ENCODE measurements at regions of chr22 and their contacts with region 1.

Region 1: DNA sequence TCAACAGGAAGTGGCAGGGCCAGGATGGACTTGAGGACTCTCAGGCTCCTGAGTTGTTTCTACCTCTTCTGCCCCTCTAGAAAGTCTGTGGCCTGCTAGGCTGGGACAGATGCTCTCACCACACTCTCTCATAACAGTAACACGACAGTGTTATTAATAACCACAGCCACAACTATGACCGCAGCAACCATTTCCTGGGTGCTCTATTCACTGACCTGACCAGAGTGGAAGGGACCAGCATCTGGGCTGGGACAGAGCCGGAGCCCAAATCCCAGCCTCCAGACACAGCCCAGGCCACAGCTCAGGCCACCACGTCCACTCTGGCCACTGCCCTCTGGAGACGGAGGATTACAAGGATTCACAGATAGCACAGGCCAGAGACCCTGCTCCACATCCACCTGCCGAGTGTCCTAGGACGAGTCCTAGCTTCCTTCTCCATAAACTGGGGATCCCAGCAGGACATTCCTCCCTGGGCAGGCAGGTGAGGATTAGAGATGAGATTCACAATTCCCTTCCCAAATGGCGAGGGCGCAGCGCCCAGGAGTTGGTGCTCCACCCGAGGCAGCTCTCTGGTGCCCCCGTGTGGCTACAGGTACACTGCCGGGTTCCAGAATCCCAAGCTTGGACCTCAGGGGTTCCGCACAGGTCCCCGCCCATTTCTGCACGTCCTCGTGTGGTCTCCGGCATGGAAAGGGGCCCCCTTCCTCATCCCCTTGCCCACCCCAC is 7.0 kb downstream of the PNPLA5 start:
- DNase-seq: peak; percentile 65
- H3K4me3 Mint-ChIP-seq: no peak overlapping the region
- H3K27ac Mint-ChIP-seq: no peak overlapping the region
- H3K4me1 Mint-ChIP-seq: no peaks in the 10 kb centered on the region
- H3K27me3 Mint-ChIP-seq: peaks cover 29% of the 10 kb centered on the region

Region 2: GRCh38 chr22:43897751-43898261 is 13.0 kb after region 1 on chr22:
- CTCF ChIA-PET with region 1: interaction called, 26 read pairs
- DNase-seq: no peak
- H3K4me3 Mint-ChIP-seq: no peak overlapping the region
- H3K27ac Mint-ChIP-seq: no peak overlapping the region
- H3K4me1 Mint-ChIP-seq: no peaks in the 10 kb centered on the region
- H3K27me3 Mint-ChIP-seq: peaks cover 40% of the 10 kb centered on the region

Region 3: DNA sequence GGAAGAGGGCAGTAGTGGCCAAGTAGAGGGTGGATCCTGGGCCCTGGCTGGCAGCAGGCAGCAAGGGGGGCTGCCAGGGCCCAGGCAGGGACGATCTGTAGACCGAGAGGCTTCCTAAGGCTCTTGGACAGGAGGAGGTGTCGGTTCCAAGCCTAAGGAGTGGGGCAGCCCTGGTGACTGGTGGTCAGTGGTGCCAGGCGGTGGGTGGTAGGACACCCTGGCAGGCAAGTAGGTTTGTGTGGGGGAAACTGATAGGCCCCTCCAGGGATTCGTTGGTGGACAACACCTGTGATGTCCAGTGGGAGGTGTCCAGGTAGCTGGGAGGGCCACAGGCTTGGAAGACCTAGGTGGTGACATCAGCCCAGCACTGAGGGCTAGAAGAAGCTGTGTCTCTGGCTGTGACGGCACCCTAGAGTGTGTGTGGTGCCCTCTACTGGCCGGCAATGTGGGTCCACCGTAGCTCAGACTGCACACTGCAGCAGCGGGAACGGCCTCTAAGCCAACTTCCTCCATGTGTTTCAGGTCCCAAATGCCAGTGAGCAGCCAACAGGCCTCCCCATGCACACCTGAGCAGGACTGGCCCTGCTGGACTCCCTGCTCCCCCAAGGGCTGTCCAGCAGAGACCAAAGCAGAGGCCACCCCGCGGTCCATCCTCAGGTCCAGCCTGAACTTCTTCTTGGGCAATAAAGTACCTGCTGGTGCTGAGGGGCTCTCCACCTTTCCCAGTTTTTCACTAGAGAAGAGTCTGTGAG is 61.0 kb after region 1 on chr22:
- CTCF ChIA-PET with region 1: interaction called, 103 read pairs
- DNase-seq: peak; percentile 83
- H3K4me3 Mint-ChIP-seq: no peak overlapping the region
- H3K27ac Mint-ChIP-seq: no peak overlapping the region
- H3K4me1 Mint-ChIP-seq: no peaks in the 10 kb centered on the region
- H3K27me3 Mint-ChIP-seq: peaks cover 18% of the 10 kb centered on the region

Measured in activated naive CD4-positive, alpha-beta T cell treated with anti-CD3 and anti-CD28 coated beads, Interleukin-2, amount 10 ng/mL, durations not matched to agents 7 days and 5 days (primary cell).